Posterior cingulate gyrus (tissue), 11 donors: ENCODE measurements at regions of chr12 and their contacts with region 1.

Region 1: DNA sequence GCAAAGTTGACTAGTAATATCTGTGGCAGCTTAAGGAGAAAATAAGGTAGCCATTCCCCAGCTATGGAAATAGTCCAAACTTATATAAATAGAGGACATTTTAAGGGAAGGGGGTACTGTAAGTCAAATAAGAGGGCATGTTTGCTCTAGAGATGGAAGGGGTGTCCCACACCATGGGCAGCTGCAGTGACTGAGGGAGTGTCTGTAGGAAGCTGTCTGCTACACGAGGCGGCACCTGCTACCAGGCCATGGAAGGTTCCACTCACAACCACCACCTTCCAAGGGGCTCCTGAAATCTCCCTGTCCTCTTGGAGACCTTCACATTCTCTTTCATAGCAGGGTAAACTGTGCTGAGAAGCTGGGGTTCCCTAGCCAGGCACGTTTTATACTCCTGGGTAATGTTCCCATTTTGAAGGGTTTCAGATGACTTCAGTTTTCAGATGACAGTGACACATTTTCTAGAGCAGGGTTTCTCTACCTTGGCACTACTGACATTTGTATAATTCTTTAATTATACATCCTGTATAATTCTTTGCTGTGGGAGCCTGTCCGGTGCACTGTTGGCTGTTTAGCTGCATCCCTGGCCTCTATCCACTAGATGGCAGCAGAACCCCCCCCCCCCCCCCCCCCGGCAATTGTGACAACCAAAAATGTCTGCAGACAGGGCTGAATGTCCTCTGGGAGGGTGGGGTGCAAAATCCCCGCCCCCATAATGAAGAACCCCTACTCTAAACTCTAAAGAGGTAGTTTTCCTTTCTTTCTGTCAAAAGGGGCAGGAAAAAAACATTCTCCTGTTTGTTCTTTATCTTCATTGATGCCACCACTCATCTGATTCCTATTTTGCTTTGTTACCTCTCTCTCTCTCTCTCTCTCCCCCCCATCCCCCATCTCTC is 11.6 kb upstream of the SMCO2 start:
- DNase-seq: peak in 3 of 10 donors; percentile 11 to 80 (median 12)

Region 2: GRCh38 chr12:27523642-27524493 is 88.9 kb after region 1 on chr12 and contains the start of gene PPFIBP1:
- intact Hi-C with region 1: loop called (anchors 1 kb)
- DNase-seq: peak; percentile 96 to 100 (median 99)

Region 3: DNA sequence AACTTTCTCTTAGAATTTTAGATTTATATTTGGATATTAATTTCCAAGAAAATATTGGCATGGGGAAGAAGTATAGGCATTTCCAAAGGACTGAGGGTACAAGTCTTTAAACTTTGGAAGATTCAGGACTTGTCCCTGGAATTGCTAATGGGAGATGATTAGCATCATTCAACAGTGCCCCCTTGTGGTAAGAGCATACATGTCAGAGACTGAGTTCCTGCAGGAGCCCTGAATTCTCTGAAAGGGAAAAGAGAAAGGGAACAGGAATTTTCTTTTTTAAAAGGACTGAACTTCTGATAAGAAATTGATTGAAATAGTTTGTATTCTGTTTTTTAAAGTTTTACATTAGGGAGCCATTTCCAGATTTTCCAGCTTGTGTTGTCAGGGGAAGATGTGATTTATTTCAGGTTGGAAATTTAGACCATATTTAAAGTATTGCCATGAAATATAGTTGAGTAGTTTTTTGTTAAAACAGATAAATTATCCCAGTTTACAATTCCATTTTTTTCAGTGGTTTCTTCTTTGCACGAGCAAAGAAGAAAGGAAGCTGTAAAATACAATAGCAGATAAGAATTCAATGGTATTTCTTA is 217.3 kb after region 1 on chr12:
- intact Hi-C with region 1: loop called (anchors 2 kb)
- DNase-seq: peak in 3 of 10 donors; percentile 33 to 59 (median 46)